GM10248 (cell line): ENCODE measurements at regions of chr14 and their contacts with region 1.

Region 1: DNA sequence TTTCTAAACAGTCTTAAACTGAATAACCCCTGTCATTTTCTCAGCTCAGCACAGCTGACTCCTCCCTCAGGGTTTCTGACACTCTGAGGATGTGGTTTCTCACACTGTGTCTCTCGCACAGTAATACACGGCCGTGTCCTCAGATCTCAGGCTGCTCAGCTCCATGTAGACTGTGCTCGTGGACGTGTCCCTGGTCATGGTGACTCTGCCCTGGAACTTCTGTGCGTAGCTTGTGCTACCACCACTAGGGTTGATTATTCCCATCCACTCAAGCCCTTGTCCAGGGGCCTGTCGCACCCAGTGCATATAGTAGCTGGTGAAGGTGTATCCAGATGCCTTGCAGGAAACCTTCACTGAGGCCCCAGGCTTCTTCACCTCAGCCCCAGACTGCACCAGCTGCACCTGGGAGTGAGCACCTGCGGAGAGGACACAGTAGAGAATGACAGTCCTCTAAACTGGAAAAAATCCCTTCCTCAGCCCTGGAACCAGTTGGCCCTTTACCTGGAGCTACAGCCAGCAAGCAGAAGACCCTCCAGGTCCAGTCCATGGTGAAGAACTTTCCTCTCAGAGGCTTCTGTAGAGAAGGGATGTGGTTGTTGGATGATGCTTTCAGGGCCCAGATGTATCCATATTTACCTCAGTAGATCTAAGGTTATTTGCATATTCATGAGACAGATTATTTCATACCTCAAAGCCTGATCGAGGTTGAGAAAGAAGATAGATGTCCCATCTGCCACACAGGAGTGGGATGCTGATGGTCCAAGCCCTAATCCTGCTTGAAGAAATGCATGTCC is 984.8 kb downstream of the TMEM121 start:
- DNase-seq: no peak
- CTCF ChIP-seq: no peak

Region 2: DNA sequence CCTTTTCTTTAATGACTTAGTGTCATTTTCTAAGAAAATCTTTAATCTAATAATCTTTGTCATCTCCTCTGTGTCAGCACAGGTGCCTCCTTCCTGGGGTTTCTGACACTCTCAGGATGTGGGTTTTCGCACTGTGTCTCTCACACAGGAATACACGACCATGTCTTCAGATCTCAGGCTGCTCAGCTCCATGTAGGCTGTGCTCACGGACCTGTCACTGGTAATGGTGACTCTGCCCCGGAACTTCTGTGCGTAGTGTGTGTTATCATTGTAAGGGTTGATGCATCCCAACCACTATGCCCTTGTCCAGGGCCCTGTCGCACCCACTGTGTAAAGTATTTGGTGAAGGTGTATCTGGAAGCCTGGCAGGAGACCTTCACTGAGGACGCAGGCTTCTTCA is 337.0 kb before region 1 on chr14:
- CTCF ChIA-PET with region 1: no interaction called
- POLR2A ChIA-PET with region 1: no interaction called
- DNase-seq: no peak
- CTCF ChIP-seq: no peak

Region 3: DNA sequence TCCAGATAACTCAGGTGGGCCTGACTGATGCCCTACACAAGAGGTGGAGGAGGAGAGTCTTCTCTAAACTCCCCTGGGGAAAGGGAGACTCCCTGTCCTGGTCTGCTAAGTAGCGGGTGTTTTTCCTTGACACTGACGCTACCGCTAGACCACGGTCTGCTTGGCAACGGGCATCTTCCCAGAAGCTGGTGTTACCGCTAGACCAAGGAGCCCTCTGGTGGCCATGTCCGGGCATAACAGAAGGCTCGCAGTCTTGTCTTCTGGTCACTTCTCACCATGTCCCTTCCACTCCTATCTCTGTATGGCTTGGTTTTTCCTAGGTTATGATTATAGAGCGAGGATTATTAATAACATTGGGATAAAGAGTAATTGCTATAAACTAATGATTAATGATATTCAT is 19.4 kb before region 1 on chr14:
- CTCF ChIA-PET with region 1: interaction called, 20 read pairs
- POLR2A ChIA-PET with region 1: no interaction called
- DNase-seq: no peak
- CTCF ChIP-seq: peak; percentile 28

Region 4: DNA sequence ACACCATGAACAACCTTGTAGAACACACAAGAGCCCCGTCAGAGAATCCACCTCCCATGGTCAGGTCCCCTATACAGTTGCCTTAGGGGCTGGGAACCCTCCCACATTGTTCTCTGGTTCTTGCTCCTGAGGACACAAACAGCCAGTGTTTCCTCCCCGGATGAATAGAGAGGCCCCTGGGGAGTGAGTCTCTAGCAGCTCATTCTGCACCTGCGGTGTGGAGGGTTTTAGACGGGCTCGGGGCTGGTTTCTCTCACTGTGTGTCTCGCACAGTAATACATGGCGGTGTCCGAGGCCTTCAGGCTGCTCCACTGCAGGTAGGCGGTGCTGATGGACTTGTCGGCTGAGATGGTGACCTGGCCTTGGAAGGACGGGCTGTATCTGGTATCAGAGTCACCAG is 67.3 kb after region 1 on chr14:
- CTCF ChIA-PET with region 1: no interaction called
- POLR2A ChIA-PET with region 1: no interaction called
- DNase-seq: no peak
- CTCF ChIP-seq: no peak

Region 5: GRCh38 chr14:106766145-106766544 is 254.9 kb after region 1 on chr14:
- CTCF ChIA-PET with region 1: no interaction called
- POLR2A ChIA-PET with region 1: no interaction called
- DNase-seq: no peak
- CTCF ChIP-seq: no peak